Posterior cingulate gyrus (tissue), 11 donors: ENCODE measurements at regions of chr4 and their contacts with region 1.

Region 1: DNA sequence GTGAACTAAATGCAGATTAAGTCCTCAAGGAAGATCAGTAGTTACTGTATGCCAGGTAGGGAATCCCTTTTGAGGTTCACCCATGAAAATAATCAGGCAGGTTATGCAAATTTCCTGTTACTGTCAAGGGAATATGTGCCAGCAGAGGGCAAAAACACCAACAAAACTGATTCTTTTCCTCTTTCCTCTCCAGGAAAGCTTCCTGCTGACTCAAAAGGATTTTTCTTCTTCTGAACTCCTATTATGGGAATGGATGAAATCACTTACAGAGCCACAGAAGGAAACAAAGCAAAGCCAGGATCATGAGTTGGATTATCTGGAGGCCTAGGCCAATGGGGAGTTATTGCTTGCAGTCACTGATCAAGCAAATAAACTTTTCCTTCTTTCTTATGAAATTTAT is 49.7 kb downstream of the TMPRSS11F start:
- DNase-seq: no peak

Region 2: DNA sequence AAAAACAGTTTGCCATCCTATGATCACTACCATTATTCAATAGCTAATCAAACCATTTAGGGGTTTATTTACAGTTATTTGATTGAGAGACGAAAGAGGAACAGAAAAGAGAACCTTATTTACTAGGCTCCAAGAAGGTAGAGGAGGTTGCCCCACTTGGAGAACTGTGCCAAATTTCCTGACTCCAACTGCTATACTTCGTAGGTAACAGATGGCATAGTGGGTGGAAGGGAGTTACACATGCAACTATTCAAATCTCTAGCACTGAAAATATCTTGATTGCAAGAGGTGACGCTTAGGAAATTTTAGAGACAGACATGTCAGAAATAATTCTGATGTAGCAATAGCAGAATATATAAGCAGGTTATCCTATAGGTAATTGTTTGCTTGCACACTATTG is 87.8 kb after region 1 on chr4:
- intact Hi-C with region 1: loop called (anchors 10 kb)
- DNase-seq: peak in 1 of 10 donors; percentile 4